ENCODE measurements at regions of chr10 and their contacts with region 1.

Region 1: DNA sequence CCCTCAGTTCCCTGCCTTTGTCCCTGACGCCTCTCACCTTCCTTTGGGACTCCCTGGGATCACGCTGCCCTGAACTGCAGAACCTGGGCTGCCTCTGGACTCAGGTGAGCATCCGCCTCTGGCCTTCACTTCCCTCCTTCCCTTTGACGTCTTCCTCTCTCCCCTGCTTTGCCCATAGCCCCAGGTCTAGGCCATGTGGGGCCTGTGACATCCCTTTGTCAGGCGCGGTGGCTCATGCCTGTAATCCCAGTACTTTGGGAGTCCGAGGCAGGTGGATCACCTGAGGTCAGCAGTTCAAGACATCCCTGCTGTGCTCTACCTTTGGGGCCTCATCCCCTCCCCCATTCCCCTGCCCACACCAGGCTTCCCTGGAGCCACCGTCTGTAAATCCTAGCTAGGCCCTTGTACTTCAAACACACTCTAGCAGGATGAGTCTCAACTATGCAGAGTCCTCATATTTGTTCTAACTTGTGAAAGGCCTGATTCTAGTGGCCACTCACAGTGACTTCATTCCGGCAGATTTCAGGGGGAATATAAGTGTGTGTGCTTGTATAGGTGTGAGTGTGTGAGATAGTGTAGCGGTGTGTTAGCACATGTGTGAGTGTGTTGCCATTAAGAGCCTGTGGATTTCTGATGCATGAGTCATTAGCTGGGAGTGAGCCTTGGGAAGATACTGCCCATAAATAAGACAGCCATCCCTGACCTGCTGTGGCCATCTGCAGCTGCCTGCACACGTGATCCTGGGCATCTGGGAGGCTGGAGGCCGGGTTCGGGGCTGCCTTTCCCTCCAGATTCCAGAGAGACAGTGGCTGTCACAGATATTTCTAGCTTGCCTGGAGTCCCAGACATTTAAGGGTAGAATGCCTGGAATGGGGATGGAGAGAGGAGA is 1.8 kb upstream of the NEURL1 start:
- DNase-seq: no peak
- ATAC-seq: no peak
- H3K4me3 ChIP-seq: no peak overlapping the region
- H3K4me3 Mint-ChIP-seq: peak overlapping the region; percentile 85
- H3K27ac ChIP-seq: no peak overlapping the region
- H3K27ac Mint-ChIP-seq: no peak overlapping the region
- H3K4me1 ChIP-seq: peaks cover 20% of the 10 kb centered on the region
- H3K4me1 Mint-ChIP-seq: peaks cover 25% of the 10 kb centered on the region
- H3K27me3 ChIP-seq: peaks cover 16 to 19% of the 10 kb centered on the region in 2 experiments
- H3K27me3 Mint-ChIP-seq: peaks cover 45% of the 10 kb centered on the region
- CTCF ChIP-seq: no peak

Region 2: DNA sequence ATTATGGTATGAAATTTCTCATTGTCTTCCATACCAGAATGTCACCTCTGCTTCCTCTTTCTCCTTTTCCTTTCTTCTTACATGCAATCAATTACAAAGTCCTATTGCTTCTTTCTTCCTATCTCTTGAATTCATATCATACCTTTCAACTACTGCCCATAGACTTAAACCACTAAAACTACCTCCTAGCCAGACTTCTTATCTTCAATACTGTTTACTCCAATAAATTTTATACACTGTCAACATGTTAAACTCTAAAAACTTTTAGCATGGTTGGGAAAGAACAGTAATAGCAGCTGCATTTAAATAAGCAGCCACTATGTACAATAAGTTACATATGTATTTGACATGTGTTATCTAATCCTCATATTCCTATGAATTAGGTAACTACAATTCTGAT is 175.7 kb before region 1 on chr10:
- CTCF ChIA-PET with region 1: no interaction called
- POLR2A ChIA-PET with region 1: no interaction called
- intact Hi-C with region 1: loop called in 1 of 2 experiments (anchors 10 kb)
- DNase-seq: no peak
- ATAC-seq: no peak
- H3K4me3 ChIP-seq: no peak overlapping the region
- H3K4me3 Mint-ChIP-seq: no peak overlapping the region
- H3K27ac ChIP-seq: no peak overlapping the region
- H3K27ac Mint-ChIP-seq: no peak overlapping the region
- H3K4me1 ChIP-seq: no peaks in the 10 kb centered on the region
- H3K4me1 Mint-ChIP-seq: no peaks in the 10 kb centered on the region
- H3K27me3 ChIP-seq: no peaks in the 10 kb centered on the region
- H3K27me3 Mint-ChIP-seq: no peaks in the 10 kb centered on the region
- CTCF ChIP-seq: no peak

Measured in CD4-positive, alpha-beta T cell (primary cell).